ENCODE measurements at regions of chr10 and their contacts with region 1.

Region 1: DNA sequence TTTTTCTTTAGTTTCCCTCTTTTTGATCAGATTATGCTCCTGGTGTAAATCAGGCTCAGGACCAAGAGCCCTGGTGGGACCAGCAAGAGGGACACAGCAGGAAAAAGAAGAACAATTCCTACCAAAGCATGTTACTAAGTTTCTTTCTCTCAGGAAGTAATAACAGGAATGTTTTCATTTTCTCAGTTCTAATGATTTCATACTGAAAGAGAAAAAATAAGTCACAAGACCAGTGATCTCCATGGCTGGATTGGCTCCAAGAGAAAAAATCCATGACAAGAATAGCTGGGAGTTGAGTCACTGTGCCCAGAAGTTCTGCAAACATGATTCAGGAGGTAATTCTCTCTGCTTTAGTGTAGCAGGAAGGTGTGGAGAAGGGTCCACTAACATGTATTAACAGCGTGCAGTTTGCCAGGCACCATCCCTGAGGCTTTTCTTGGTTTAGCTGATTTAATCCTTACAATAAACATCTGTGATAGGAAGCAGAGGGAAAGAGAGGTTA is 23.8 kb upstream of the IFIT2 start:
- DNase-seq: peak in 1 of 2 donors; percentile 37
- ATAC-seq: peak; percentile 78 to 87
- H3K4me3 ChIP-seq: no peak overlapping the region
- H3K27ac ChIP-seq: peak overlapping the region; percentile 55 to 78 (median 74)
- H3K4me1 ChIP-seq: peaks cover 5 to 33% of the 10 kb centered on the region in 2 donors
- H3K27me3 ChIP-seq: no peaks in the 10 kb centered on the region
- CTCF ChIP-seq: no peak
- POLR2A ChIP-seq: no peak

Region 2: DNA sequence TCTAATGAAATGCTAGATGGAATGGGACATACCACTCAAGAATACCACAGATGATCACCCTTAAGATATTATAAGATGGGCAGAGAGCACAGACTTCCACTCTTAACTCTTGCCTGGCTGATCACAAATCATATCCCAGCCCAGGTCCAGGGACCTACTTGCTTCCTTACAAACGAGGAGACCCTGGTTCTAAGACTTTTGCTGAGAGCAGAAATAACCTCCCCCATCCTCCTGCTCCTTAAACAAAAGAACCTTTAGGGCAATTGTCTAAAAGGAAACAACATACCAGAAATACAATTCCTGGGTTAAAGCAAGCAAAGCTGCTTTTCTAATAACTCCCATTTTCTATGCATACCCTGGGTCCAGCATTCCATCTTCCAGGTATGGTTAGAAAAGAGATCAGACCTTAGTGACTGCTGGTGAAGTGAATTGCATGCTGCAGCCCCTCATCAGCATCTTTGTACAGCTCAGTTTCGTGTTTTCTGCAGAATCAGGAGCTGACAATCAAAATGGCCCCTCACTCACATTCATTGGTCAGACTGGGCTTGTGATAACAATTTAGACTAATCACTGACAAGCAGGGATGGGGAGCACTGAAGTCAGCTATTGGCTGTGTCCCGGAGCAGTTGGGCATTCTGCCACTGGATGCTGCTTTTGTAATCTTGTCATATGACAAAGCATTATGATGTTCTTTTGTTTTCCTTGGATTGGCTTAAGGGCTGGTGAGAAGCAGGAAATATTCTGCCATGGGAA is 64.3 kb after region 1 on chr10:
- in situ Hi-C with region 1: no loop called
- intact Hi-C with region 1: no loop called
- DNase-seq: peak in 1 of 2 donors; percentile 31
- ATAC-seq: no peak
- H3K4me3 ChIP-seq: no peak overlapping the region
- H3K27ac ChIP-seq: no peak overlapping the region
- H3K4me1 ChIP-seq: peaks cover 12 to 21% of the 10 kb centered on the region in 2 donors
- H3K27me3 ChIP-seq: no peaks in the 10 kb centered on the region
- CTCF ChIP-seq: no peak
- POLR2A ChIP-seq: no peak

Region 3: DNA sequence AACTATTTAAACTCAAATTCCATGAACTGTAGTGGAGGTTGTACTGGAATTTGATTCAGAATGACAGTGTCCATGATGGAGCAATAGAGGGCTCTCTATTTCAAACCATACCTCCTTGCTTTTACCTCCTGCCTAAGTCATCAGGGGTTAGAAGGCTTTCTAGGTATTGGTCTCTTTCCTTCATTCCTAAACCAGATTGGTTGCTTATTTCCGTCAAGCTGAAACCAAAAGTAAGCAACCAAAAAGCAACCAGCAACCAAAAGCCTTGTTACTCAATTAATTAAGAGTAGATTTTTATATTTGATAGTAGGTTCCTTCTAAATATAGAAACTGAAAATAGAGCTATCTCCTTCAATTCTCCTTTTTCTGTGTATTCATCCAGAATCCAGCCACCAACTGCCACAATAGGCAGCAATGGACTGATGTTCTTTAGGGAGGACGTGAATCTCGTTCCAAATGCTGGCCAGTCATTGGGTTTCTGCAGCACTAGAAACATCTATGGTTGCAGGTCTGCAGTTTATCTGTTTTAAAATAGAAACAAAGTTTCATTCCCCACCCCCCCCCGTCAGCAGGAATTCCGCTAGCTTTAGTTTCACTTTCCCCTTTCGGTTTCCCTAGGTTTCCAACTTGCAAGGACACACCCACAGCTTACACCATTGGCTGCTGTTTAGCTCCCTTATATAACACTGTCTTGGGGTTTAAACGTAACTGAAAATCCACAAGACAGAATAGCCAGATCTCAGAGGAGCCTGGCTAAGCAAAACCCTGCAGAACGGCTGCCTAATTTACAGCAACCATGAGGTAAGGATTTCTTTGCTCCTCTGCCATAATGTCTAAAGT is 114.1 kb after region 1 on chr10 and contains the start of gene IFIT1:
- in situ Hi-C with region 1: loop called in 1 of 4 experiments (anchors 25 kb)
- intact Hi-C with region 1: no loop called
- DNase-seq: peak; percentile 57 to 65
- ATAC-seq: peak; percentile 93 to 97
- H3K4me3 ChIP-seq: peak within 1 kb of the TSS; percentile 58 to 70 (median 58)
- H3K27ac ChIP-seq: peak within 1 kb of the TSS; percentile 72 to 86 (median 84)
- H3K4me1 ChIP-seq: peaks cover 40 to 43% of the 10 kb centered on the region in 2 donors
- H3K27me3 ChIP-seq: no peaks in the 10 kb centered on the region
- CTCF ChIP-seq: no peak
- POLR2A ChIP-seq: peak in 1 of 2 donors; percentile 56
- total RNA-seq, gene IFIT1: 1.8 to 8.9 (median 3.0) TPM

Region 4: GRCh38 chr10:89574368-89574767 is 296.3 kb after region 1 on chr10:
- in situ Hi-C with region 1: no loop called
- intact Hi-C with region 1: no loop called
- DNase-seq: no peak
- ATAC-seq: no peak
- H3K4me3 ChIP-seq: no peak overlapping the region
- H3K27ac ChIP-seq: no peak overlapping the region
- H3K4me1 ChIP-seq: no peaks in the 10 kb centered on the region
- H3K27me3 ChIP-seq: no peaks in the 10 kb centered on the region
- CTCF ChIP-seq: no peak
- POLR2A ChIP-seq: no peak

Measured in gastrocnemius medialis (tissue), 4 donors.